ENCODE measurements at regions of chr12 and their contacts with region 1.

Region 1: DNA sequence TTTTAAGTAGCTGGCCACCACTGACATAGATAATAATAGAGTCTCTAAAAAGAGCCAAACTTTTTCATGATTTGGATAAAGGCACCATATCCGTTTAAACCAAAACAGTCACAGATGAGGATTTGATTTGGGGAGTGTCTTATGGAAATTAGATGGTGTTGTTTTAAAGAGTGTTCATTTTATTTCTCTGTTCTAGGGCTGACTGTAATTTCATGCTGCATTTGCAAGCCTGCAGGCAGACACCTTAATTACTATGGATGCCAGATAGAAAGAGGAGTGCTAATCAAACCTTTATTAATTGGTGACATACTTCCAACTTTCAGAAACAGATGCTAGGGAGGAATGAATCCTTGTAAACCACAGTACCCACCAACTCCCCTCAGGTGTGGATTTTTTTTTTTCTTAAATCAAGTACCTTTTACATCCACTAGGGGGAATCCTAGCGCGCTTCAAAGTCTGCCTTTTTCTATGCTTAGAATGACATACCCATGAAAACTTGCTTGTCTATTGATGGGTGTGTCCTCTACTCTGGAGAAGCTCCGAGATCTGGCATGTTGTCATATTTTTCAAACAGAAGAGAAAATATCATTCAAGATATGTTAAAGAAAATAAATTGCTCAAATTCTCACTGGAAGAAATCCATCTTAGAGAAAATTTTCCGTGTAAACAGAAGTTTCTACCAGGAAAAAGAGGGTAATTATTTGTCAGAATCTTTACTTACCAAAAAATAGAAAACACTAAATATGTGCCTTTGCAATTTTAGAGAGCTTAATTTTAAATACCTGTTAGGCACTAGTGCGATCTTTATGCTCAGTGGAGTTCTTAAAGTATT is 14.2 kb upstream of the PLXNC1 start:
- DNase-seq: peak; percentile 20
- H3K4me3 ChIP-seq: no peak overlapping the region
- H3K27ac ChIP-seq: no peak overlapping the region
- H3K27me3 ChIP-seq: peaks cover 7% of the 10 kb centered on the region
- CTCF ChIP-seq: peak; percentile 80

Region 2: GRCh38 chr12:93938931-93939330 is 195.2 kb before region 1 on chr12:
- CTCF ChIA-PET with region 1: no interaction called
- POLR2A ChIA-PET with region 1: no interaction called
- DNase-seq: no peak
- H3K4me3 ChIP-seq: no peak overlapping the region
- H3K27ac ChIP-seq: no peak overlapping the region
- H3K27me3 ChIP-seq: no peaks in the 10 kb centered on the region
- CTCF ChIP-seq: no peak

Region 3: GRCh38 chr12:94435511-94435927 is 301.3 kb after region 1 on chr12:
- CTCF ChIA-PET with region 1: interaction called, 49 read pairs
- POLR2A ChIA-PET with region 1: no interaction called
- DNase-seq: no peak
- H3K4me3 ChIP-seq: no peak overlapping the region
- H3K27ac ChIP-seq: no peak overlapping the region
- H3K27me3 ChIP-seq: no peaks in the 10 kb centered on the region
- CTCF ChIP-seq: no peak

Region 4: DNA sequence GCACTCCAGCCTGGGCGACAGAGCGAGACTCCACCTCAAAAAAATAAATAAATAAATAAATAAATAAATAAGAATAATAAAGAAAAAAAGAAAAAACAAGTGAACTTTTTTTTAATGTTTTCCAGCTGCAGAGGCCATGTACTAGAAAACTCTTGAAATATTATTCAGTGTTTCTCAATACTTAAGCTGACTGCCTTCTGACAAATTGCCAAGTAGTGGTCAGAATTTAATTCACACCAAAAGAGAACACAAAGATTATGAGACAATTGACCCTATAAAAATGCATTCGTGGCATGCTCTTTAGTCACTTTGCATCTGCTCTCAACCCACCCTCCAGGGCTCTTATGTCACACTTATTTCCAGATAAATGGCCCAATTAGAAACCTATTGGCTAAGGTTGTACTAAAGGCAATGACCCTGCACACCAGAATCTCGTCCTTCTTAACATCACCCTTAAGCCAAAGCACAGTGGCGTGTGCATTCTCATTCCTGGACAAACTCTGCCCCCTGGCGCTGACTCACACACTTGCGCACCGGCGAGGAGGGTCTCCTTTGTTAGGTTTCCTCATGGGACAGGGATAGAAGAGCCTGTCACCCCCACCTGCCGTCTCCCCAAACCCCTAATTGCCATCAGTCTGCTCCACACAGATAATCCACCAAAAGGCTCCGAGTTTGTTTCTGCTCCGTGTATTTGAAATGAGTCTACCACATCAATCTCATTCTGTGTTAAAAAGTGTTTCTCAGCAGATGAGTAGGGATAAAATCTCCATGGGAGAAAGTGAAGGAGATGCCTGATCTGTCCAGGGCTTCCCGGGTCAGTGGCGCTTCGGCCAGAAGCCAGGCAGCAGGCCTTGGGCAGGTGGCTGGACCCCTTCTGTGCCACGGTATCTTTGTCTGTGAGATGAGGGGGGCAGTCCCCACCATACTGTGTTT is 398.6 kb after region 1 on chr12:
- CTCF ChIA-PET with region 1: interaction called, 48 read pairs
- POLR2A ChIA-PET with region 1: no interaction called
- DNase-seq: peak; percentile 20
- H3K4me3 ChIP-seq: no peak overlapping the region
- H3K27ac ChIP-seq: no peak overlapping the region
- H3K27me3 ChIP-seq: peaks cover 10% of the 10 kb centered on the region
- CTCF ChIP-seq: peak; percentile 85

Measured in AG04450 (cell line).